ENCODE measurements at regions of chr20 and their contacts with region 1.

Region 1: DNA sequence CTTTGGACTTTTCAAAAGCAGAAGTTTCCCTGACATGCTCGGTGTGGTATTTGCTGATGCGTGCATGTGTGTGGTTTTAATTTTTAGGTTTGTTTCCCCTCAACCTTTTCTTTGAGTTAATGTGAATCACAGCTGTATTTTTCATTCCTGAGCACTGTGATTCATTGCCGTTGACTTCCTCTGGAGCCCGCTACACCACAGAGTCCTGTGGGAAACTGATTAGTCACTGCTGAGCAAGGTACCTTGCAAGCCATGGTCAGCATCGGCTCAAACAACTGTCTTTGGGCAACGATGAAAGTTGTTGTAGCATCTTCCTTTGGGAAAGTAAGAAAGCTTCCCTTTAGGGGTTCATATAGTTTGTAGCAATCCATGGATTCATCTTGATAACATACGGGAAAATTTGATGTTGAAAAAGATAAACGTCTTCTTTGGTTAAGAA is 57.5 kb downstream of the RIN2 start:
- DNase-seq: no peak
- H3K4me3 ChIP-seq: no peak overlapping the region
- H3K27ac ChIP-seq: no peak overlapping the region
- H3K4me1 ChIP-seq: peaks cover 0 to 3% (median 0%) of the 10 kb centered on the region in 4 experiments; a peak in 1 of 7 replicates
- H3K27me3 ChIP-seq: no peaks in the 10 kb centered on the region
- CTCF ChIP-seq: no peak
- EP300 ChIP-seq: no peak
- POLR2A ChIP-seq: no peak
- RAD21 ChIP-seq: peak in 1 of 2 experiments; percentile 19; a peak in 1 of 4 replicates

Region 2: GRCh38 chr20:19735446-19735845 is 80.1 kb before region 1 on chr20:
- CTCF ChIA-PET with region 1: no interaction called
- POLR2A ChIA-PET with region 1: no interaction called
- DNase-seq: no peak
- H3K4me3 ChIP-seq: no peak overlapping the region
- H3K27ac ChIP-seq: no peak overlapping the region
- H3K4me1 ChIP-seq: no peaks in the 10 kb centered on the region
- H3K27me3 ChIP-seq: no peaks in the 10 kb centered on the region
- CTCF ChIP-seq: no peak
- EP300 ChIP-seq: no peak
- POLR2A ChIP-seq: no peak
- RAD21 ChIP-seq: no peak

Region 3: DNA sequence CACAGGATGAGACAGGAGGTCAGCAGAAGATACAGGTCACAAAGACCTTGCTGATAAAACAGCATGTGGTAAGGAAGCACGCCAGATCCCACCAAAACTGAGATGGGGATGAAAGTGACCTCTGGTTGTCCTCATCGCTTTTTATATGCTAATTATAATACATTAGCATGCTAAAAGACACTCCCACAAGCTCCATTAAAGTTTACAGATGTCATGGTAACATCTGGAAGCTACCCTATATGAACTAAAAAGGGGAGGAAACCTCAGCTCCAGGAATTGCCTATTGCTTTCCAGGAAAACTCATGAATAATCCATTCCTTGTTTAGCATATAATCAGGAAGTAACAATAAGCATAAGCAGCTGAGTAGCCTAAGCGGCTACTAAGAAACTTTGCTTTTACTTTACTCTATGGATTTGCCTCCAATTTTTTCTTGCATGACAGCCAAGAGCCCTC is 65.9 kb before region 1 on chr20:
- CTCF ChIA-PET with region 1: no interaction called
- POLR2A ChIA-PET with region 1: no interaction called
- DNase-seq: no peak
- H3K4me3 ChIP-seq: no peak overlapping the region
- H3K27ac ChIP-seq: no peak overlapping the region
- H3K4me1 ChIP-seq: peaks cover 0 to 2% (median 0%) of the 10 kb centered on the region in 4 experiments; a peak in 1 of 7 replicates
- H3K27me3 ChIP-seq: no peaks in the 10 kb centered on the region
- CTCF ChIP-seq: no peak
- EP300 ChIP-seq: no peak
- POLR2A ChIP-seq: no peak
- RAD21 ChIP-seq: no peak

Region 4: GRCh38 chr20:19784511-19785172 is 30.9 kb before region 1 on chr20:
- CTCF ChIA-PET with region 1: interaction called, 12 read pairs
- POLR2A ChIA-PET with region 1: interaction called, 5 read pairs
- DNase-seq: peak in 1 of 2 experiments; percentile 49
- H3K4me3 ChIP-seq: no peak overlapping the region
- H3K27ac ChIP-seq: no peak overlapping the region
- H3K4me1 ChIP-seq: peaks cover 0 to 5% (median 2%) of the 10 kb centered on the region in 4 experiments; a peak in 5 of 7 replicates
- H3K27me3 ChIP-seq: no peaks in the 10 kb centered on the region
- CTCF ChIP-seq: peak; percentile 40 to 72 (median 69)
- EP300 ChIP-seq: no peak
- POLR2A ChIP-seq: no peak
- RAD21 ChIP-seq: peak; percentile 79 to 82

Region 5: DNA sequence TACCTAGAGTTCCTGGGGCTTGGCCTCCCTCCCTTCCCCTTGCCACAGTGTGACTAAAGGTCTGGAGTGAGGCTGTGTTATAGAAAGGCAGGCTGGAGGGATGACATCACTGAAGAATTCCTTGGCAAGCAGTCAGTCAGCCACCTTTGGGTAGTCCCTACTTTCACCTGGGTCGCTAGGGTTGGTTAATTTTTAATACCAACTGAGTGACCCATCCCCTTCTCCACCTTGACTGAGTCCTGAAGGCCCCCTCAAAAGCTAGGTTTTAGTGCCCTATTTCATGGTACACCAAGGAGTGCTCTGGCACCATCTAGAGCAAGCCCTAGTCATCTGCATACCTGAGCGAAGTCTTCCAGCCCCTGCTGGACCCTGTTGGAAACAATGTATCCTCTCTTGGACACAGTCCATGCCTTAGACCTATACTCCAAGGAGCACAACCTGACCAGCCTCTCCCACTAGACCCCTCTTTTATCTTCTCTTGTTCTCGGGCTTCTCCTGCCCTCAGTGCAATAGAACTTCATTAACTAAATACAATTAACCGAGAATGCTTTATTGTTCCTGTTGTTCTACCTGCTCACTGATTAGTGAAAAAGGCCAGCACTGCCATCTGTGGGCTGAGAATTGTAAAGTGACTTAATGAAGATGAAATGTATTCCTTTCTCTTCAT is 12.9 kb before region 1 on chr20:
- CTCF ChIA-PET with region 1: interaction called, 12 read pairs
- POLR2A ChIA-PET with region 1: no interaction called
- DNase-seq: no peak
- H3K4me3 ChIP-seq: no peak overlapping the region
- H3K27ac ChIP-seq: no peak overlapping the region
- H3K4me1 ChIP-seq: no peaks in the 10 kb centered on the region
- H3K27me3 ChIP-seq: no peaks in the 10 kb centered on the region
- CTCF ChIP-seq: peak; percentile 40 to 95 (median 61)
- EP300 ChIP-seq: no peak
- POLR2A ChIP-seq: no peak
- RAD21 ChIP-seq: peak; percentile 53 to 71

Region 6: GRCh38 chr20:19828232-19828631 is 12.7 kb after region 1 on chr20:
- CTCF ChIA-PET with region 1: interaction called, 12 read pairs
- POLR2A ChIA-PET with region 1: no interaction called
- DNase-seq: no peak
- H3K4me3 ChIP-seq: no peak overlapping the region
- H3K27ac ChIP-seq: no peak overlapping the region
- H3K4me1 ChIP-seq: peaks cover 0 to 3% (median 0%) of the 10 kb centered on the region in 4 experiments; a peak in 1 of 7 replicates
- H3K27me3 ChIP-seq: no peaks in the 10 kb centered on the region
- CTCF ChIP-seq: peak in 1 of 3 experiments; percentile 21; a peak in 1 of 4 replicates
- EP300 ChIP-seq: no peak
- POLR2A ChIP-seq: no peak
- RAD21 ChIP-seq: no peak